ENCODE measurements at regions of chr1 and their contacts with region 1.

Region 1: GRCh38 chr1:155172732-155173477 is at the start of gene KRTCAP2:
- DNase-seq: peak; percentile 94 to 96 (median 96)
- H3K4me3 ChIP-seq: peak within 1 kb of the TSS; percentile 95
- H3K27ac ChIP-seq: peak within 1 kb of the TSS; percentile 56 to 80
- H3K4me1 ChIP-seq: no peaks in the 10 kb centered on the region
- H3K27me3 ChIP-seq: no peaks in the 10 kb centered on the region
- CTCF ChIP-seq: peak; percentile 92 to 98 (median 96)
- EP300 ChIP-seq: no peak
- POLR2A ChIP-seq: peak; percentile 72
- total RNA-seq, gene KRTCAP2: 96.5 to 209 (median 158) TPM

Region 2: GRCh38 chr1:155135415-155136028 is 37.4 kb before region 1 on chr1 and contains the start of gene SLC50A1:
- intact Hi-C with region 1: loop called in 1 of 4 experiments (anchors 5 kb)
- DNase-seq: peak; percentile 94 to 98 (median 95)
- H3K4me3 ChIP-seq: peak within 1 kb of the TSS; percentile 72
- H3K27ac ChIP-seq: peak within 1 kb of the TSS; percentile 87 to 99
- H3K4me1 ChIP-seq: peaks cover 5% of the 10 kb centered on the region
- H3K27me3 ChIP-seq: no peaks in the 10 kb centered on the region
- CTCF ChIP-seq: peak; percentile 42 to 86 (median 72)
- EP300 ChIP-seq: no peak
- POLR2A ChIP-seq: peak; percentile 94
- total RNA-seq, gene SLC50A1: 10.8 to 31.4 (median 16.8) TPM

Region 3: DNA sequence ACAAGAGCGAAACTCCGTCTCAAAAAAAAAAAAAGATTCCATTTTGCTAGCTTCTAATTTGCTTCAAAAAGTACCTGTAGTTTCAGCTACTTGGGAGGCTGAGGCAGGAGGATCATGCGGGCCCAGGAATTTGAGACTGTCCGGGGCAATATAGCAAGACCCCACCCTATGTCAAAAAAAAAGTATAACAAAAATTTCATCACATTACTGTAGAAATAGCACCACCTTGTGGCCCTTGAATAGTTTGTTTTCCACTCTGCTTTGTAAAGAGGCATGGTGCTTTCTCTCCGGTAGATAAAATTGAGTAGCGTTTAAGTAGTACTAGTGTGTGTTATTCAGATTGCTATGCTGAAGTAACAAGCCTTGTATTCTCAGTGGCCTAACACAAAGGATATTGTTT is 418.9 kb after region 1 on chr1:
- intact Hi-C with region 1: loop called in 1 of 4 experiments (anchors 10 kb)
- DNase-seq: no peak
- H3K4me3 ChIP-seq: no peak overlapping the region
- H3K27ac ChIP-seq: no peak overlapping the region
- H3K4me1 ChIP-seq: no peaks in the 10 kb centered on the region
- H3K27me3 ChIP-seq: no peaks in the 10 kb centered on the region
- CTCF ChIP-seq: peak; percentile 21 to 46 (median 34)
- EP300 ChIP-seq: no peak
- POLR2A ChIP-seq: no peak